Activated naive CD4-positive, alpha-beta T cell treated with anti-CD3 and anti-CD28 coated beads for 36 hours (primary cell): ENCODE measurements at regions of chr6 and their contacts with region 1.

Region 1: GRCh38 chr6:52419809-52420670 is at the start of gene EFHC1:
- DNase-seq: peak; percentile 99
- H3K4me3 Mint-ChIP-seq: no peak within 1 kb of the TSS
- H3K27ac Mint-ChIP-seq: peak within 1 kb of the TSS; percentile 88
- H3K4me1 Mint-ChIP-seq: peaks cover 22% of the 10 kb centered on the region
- H3K27me3 Mint-ChIP-seq: no peaks in the 10 kb centered on the region
- total RNA-seq, gene EFHC1: 1.2 to 3.1 TPM

Region 2: DNA sequence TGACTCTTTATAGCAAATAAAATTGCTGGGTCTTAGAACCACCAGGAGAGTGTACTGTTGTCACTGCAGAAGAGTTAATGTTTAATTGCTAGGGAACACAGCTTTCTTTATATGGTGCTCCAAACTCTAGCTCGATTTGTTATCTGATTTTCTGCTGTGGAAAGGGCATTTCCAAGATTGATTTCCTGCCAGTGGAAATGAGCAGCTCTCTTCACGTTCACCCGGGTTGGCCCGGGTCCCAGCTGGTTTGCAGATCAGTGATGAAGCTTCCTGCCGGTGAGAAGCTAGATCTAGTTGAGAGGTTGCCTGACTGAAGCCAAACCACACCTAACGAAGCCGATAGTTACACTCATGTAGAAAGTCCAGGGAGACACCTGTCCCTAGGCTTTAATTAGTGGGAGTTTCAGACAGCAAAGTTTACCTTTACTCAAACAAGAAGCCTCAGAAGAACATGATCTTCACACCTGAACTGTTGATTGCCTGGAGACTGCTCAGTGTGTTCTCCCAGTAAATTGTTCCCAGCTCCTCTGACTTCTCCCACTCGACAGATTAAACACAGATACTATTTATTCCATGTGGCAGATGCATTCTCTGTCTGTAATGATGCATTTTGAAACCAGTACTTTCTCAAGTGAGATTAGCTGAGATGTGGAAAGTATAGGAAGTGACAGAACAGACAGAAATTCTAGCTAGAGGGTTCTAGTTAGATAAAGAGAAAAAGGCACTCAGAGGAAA is 30.2 kb before region 1 on chr6:
- CTCF ChIA-PET with region 1: interaction called, 7 read pairs
- intact Hi-C with region 1: loop called (anchors 1 kb)
- DNase-seq: peak; percentile 79
- H3K4me3 Mint-ChIP-seq: peak overlapping the region; percentile 14
- H3K27ac Mint-ChIP-seq: peak overlapping the region; percentile 81
- H3K4me1 Mint-ChIP-seq: peaks cover 75% of the 10 kb centered on the region
- H3K27me3 Mint-ChIP-seq: no peaks in the 10 kb centered on the region

Region 3: GRCh38 chr6:52577022-52577777 is 157.2 kb after region 1 on chr6 and contains the start of gene TRAM2:
- CTCF ChIA-PET with region 1: interaction called, 9 read pairs
- intact Hi-C with region 1: loop called (anchors 1 kb)
- DNase-seq: peak; percentile 65
- H3K4me3 Mint-ChIP-seq: peak within 1 kb of the TSS; percentile 78
- H3K27ac Mint-ChIP-seq: peak within 1 kb of the TSS; percentile 65
- H3K4me1 Mint-ChIP-seq: peaks cover 43% of the 10 kb centered on the region
- H3K27me3 Mint-ChIP-seq: no peaks in the 10 kb centered on the region
- total RNA-seq, gene TRAM2: 2.5 to 2.9 TPM

Region 4: GRCh38 chr6:52647199-52647598 is 227.2 kb after region 1 on chr6:
- CTCF ChIA-PET with region 1: interaction called, 11 read pairs
- intact Hi-C with region 1: no loop called
- DNase-seq: no peak
- H3K4me3 Mint-ChIP-seq: no peak overlapping the region
- H3K27ac Mint-ChIP-seq: no peak overlapping the region
- H3K4me1 Mint-ChIP-seq: peaks cover 13% of the 10 kb centered on the region
- H3K27me3 Mint-ChIP-seq: no peaks in the 10 kb centered on the region

Region 5: GRCh38 chr6:52724406-52725121 is 304.5 kb after region 1 on chr6:
- CTCF ChIA-PET with region 1: no interaction called
- intact Hi-C with region 1: loop called (anchors 1 kb)
- DNase-seq: peak; percentile 79
- H3K4me3 Mint-ChIP-seq: no peak overlapping the region
- H3K27ac Mint-ChIP-seq: no peak overlapping the region
- H3K4me1 Mint-ChIP-seq: no peaks in the 10 kb centered on the region
- H3K27me3 Mint-ChIP-seq: no peaks in the 10 kb centered on the region

Region 6: GRCh38 chr6:52995913-52996645 is 576.0 kb after region 1 on chr6:
- CTCF ChIA-PET with region 1: no interaction called
- intact Hi-C with region 1: loop called (anchors 2 kb)
- DNase-seq: peak; percentile 54
- H3K4me3 Mint-ChIP-seq: peak overlapping the region; percentile 98
- H3K27ac Mint-ChIP-seq: peak overlapping the region; percentile 99
- H3K4me1 Mint-ChIP-seq: peaks cover 29% of the 10 kb centered on the region
- H3K27me3 Mint-ChIP-seq: peaks cover 13% of the 10 kb centered on the region

Region 7: GRCh38 chr6:53544470-53545308 is 1124.6 kb after region 1 on chr6 and contains the start of gene GCLC:
- CTCF ChIA-PET with region 1: no interaction called
- intact Hi-C with region 1: loop called (anchors 1 kb)
- DNase-seq: peak; percentile 88
- H3K4me3 Mint-ChIP-seq: peak within 1 kb of the TSS; percentile 94
- H3K27ac Mint-ChIP-seq: peak within 1 kb of the TSS; percentile 86
- H3K4me1 Mint-ChIP-seq: peaks cover 63% of the 10 kb centered on the region
- H3K27me3 Mint-ChIP-seq: no peaks in the 10 kb centered on the region
- total RNA-seq, gene GCLC: 13.9 to 18.1 TPM